Left cardiac atrium (tissue), 4 donors: ENCODE measurements at regions of chr1 and their contacts with region 1.

Region 1: DNA sequence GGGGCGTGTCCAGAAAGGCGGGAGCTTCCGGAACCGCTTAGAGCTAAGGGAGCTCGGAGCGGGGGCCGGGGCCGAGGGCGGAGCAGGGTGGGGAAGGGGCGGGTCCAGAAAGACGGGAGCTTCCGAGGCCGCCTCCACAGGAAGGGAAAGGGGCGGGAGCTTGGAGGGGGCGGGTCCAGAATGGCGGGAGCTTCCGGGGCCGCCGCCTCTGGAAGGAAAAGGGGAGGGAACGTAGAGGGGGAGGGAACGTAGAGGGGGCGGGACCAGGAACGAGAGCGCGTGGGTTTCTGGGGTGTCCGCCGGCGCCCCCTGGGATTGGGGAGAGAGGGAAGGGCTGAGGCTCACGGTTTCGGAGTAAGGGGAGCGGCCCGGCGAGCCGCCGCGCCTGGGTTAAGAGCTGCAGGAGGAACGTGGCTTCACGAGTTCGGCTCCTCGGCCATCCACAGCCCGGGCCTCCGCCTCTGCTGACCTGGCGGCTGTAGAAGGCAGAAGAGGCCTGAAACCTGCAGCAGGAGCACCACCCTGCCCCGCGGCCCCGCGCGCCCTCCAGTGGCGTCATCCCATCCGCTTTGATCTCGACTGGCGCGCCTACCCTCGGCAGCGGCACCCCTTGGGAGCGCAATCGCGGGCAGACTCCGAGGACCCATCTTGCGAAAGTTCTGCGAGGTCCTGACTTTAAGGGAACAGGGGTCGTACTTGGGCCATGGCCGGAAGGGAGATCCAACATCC is 22.9 kb upstream of the HPDL start:
- DNase-seq: peak; percentile 99
- ATAC-seq: peak; percentile 97 to 98

Region 2: DNA sequence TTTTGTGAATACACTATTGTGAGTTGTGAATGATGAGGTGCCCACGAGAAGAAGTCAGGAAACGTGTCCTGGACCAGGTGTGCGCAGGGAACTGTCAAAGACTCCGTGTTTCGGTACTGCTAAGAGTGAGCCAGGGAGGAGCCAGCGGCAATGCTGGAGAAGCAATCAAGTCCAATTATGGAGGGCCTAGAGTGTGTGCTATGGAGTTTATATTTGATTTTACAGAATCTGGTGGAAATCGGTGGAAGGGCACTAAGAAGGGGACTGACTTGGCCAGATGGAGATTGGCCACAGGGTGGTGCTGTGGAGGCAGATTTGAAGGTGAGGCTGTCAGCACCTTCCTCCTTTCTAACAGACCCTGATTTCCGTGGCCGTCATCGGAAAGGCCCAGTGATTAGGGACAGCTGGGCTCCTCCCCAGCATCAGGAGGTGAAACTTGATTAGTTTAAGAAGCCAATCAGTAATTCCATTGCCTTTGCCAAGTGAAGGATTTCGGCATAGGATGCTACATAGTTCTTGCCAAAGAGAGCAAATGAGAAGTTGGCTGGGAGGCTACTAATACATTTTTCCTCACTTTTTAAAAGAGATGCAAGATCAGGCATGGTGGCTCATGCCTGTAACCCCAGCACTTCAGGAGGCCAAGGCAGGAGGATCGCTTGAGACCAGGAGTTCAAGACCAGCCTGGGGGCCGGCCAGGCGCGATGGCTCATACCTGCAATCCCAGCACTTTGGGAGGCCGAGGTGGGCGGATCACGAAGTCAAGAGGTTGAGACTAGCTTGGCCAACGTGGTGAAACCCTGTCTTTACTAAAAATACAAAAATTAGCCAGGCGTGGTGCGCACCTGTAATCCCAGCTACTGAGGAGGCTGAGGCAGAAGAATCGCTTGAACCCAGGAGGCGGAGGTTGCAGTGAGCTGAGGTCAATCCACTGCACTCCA is 467.7 kb before region 1 on chr1:
- intact Hi-C with region 1: loop called in 1 of 2 experiments (anchors 5 kb)
- DNase-seq: peak; percentile 92
- ATAC-seq: peak; percentile 82 to 86

Region 3: GRCh38 chr1:45011837-45012638 is 291.7 kb before region 1 on chr1 and contains the start of gene UROD:
- intact Hi-C with region 1: loop called (anchors 2 to 5 kb)
- DNase-seq: peak; percentile 94
- ATAC-seq: peak; percentile 93
- total RNA-seq, gene UROD: 63.4 to 65.1 TPM

Region 4: GRCh38 chr1:45018599-45019230 is 285.0 kb before region 1 on chr1:
- intact Hi-C with region 1: loop called (anchors 2 to 5 kb)
- DNase-seq: peak; percentile 43
- ATAC-seq: peak; percentile 56 to 78

Region 5: GRCh38 chr1:45339789-45340570 is 36.2 kb after region 1 on chr1 and contains the starts of genes MUTYH and TOE1:
- intact Hi-C with region 1: loop called in 1 of 2 experiments (anchors 5 kb)
- DNase-seq: peak; percentile 97
- ATAC-seq: peak; percentile 97
- total RNA-seq, gene MUTYH: 9.1 to 11.0 TPM
- total RNA-seq, gene TOE1: 5.4 to 6.6 TPM

Region 6: DNA sequence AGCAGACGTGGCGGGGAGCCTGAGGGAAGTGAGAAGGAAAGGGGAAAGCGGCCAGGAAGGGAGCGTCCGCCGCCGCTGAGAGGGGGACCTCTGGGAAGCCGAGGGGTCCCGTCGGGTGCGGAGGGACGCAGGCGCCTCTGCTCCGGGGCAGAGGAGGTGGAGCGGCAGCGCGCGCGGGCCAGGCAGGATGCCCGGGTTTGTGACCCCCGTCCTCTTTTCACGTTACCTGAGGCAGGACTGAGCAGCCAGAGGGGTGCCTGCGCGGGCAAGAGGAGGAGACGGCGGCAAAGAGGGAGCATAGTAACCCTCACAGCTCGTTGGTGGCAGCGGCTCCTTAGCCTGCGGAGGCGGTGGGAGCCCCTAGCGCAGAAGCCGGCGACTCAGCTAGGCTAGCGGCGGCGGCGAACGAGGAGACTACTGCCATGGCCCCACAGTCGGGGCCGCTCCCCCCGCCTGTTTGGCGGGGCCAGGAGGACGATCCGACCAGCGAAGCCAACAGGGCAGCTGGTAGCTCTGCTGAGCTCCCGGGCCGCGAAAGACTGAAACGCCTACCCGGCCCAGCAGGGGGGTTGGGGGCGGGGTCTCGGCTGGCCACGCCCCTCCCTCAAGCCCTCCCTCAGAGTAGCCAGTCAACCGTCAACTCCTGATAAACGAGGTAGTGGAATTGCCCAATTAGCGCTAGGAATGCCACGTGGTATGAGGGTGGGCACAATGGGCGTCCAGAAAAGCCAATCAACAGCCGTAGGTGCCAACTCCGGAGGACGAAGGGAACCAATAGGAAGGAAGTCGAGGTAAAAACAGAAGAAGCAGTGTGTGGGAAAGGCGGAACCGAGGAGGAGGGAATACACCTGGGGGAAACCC is 187.1 kb after region 1 on chr1 and contains the start of gene TESK2:
- intact Hi-C with region 1: loop called in 1 of 2 experiments (anchors 2 kb)
- DNase-seq: peak; percentile 95
- ATAC-seq: peak; percentile 98
- total RNA-seq, gene TESK2: 1.4 to 2.8 TPM

Region 7: DNA sequence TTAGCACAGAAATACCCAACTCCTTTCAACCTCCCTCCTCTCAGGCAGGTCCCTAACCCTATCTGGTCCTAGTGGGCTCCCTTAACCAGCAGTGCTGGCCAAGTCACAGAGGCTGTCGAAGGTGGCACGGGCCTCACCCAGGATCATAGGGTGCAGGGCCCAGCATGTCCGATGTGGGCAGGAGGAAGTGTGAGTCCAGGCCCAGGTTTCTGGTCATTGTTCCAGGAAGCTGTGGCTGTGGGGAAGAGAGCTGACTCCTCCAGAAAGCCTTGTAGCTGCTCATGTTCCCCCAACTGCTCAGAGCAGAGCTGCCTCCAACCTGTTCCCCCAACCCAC is 317.7 kb after region 1 on chr1:
- intact Hi-C with region 1: no loop called
- DNase-seq: no peak
- ATAC-seq: peak; percentile 12 to 37